ENCODE measurements at regions of chr11 and their contacts with region 1.

Region 1: GRCh38 chr11:6505577-6506240 is 8.6 kb downstream of the DNHD1 start:
- DNase-seq: no peak

Region 2: GRCh38 chr11:6389921-6390724 is 115.6 kb before region 1 on chr11 and contains the start of gene SMPD1:
- intact Hi-C with region 1: loop called in 1 of 2 experiments (anchors 10 kb)
- DNase-seq: peak; percentile 98
- total RNA-seq, gene SMPD1: 35.4 to 51.6 TPM

Region 3: DNA sequence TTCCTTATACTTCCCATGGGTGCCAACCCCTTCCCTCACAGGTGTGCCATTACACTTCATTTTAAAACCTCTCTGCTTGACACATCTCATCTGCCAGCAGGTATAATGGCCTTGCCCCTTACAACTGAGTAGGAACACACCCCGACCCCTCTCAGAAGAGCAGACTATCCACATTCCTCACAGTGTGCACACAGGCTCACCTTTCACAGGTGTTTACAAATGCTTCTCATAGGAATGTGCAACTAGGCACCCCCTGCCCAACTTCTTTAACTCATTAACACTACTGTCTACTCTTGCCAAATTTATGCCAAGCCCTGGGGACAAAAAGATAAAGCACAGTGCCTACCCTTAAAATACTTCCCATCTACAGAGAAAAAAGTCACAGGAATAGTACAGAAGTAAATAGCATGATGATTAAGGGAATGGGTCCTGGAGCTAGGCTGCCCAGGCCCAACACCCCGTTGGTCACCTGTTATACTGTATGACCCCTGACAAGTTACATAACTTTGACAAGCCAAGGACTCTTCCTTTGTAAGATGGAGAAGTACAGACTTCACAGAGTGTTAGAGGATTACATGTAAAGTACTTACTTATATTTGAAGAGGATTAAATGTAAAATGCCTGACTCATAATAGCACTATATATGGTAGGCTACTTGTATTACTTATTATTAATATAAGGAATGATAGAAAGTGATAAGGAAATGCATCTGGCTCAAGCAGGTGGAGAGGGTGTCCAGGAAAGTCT is 47.2 kb before region 1 on chr11:
- intact Hi-C with region 1: no loop called
- DNase-seq: no peak

Measured in posterior vena cava (tissue), 2 donors.